ENCODE measurements at regions of chr5 and their contacts with region 1.

Region 1: GRCh38 chr5:120388016-120388781 is 75.9 kb upstream of the PRR16 start:
- DNase-seq: no peak

Region 2: DNA sequence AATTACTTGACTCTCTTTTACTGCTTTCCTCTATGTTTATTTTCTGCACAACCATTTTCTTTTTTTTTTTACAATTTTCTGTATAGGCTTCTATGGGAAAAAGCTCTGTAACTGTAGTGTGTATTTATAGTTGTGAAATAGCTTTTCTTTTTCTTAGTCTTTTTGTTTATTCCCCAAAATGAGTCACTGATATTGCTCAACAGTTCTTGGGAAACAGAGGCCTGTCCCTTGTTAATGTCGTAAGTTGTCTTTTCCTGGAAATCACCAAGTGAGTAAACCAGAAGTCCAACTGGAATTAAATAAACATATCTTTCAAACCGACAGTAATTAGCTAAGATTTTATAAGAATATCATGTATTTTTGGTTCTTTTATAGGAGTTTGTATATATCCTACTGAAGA is 249.2 kb before region 1 on chr5:
- intact Hi-C with region 1: loop called (anchors 5 kb)
- DNase-seq: no peak

Region 3: GRCh38 chr5:120207129-120207528 is 181.1 kb before region 1 on chr5:
- intact Hi-C with region 1: no loop called
- DNase-seq: no peak

Region 4: DNA sequence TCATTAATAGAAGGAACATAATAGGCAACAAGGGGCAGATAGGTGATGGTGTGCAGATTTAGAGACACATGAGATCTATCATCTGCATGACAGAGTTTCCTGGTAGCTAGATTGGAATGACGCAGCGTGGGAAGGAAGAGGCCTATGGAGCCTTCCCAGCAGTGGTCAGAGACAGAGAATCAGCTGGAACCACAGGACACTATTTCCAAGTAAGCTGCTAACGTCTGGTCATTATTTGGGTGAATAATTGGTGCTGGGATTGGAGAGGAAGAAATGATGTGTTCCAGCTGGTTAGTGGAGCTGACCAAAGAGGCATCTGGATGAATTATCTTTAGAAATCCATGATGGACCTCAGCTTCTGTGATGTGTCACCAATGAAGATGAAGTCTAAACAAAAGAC is 15.3 kb before region 1 on chr5:
- intact Hi-C with region 1: loop called (anchors 2 kb)
- DNase-seq: no peak